ENCODE measurements at regions of chr12 and their contacts with region 1.

Region 1: GRCh38 chr12:93502802-93503623 is 35.7 kb downstream of the MRPL42 start:
- DNase-seq: no peak
- ATAC-seq: no peak
- H3K4me3 ChIP-seq: no peak overlapping the region
- H3K27ac ChIP-seq: no peak overlapping the region
- H3K4me1 ChIP-seq: no peaks in the 10 kb centered on the region
- H3K27me3 ChIP-seq: no peaks in the 10 kb centered on the region

Region 2: GRCh38 chr12:94101738-94102660 is 599.0 kb after region 1 on chr12:
- intact Hi-C with region 1: loop called (anchors 2 kb)
- DNase-seq: peak; percentile 89 to 93
- ATAC-seq: peak; percentile 94
- H3K4me3 ChIP-seq: peak overlapping the region; percentile 50 to 85
- H3K27ac ChIP-seq: peak overlapping the region in 1 of 2 donors; percentile 20
- H3K4me1 ChIP-seq: no peaks in the 10 kb centered on the region
- H3K27me3 ChIP-seq: no peaks in the 10 kb centered on the region

Measured in aorta (tissue), 5 donors.